ENCODE measurements at regions of chr10 and their contacts with region 1.

Region 1: DNA sequence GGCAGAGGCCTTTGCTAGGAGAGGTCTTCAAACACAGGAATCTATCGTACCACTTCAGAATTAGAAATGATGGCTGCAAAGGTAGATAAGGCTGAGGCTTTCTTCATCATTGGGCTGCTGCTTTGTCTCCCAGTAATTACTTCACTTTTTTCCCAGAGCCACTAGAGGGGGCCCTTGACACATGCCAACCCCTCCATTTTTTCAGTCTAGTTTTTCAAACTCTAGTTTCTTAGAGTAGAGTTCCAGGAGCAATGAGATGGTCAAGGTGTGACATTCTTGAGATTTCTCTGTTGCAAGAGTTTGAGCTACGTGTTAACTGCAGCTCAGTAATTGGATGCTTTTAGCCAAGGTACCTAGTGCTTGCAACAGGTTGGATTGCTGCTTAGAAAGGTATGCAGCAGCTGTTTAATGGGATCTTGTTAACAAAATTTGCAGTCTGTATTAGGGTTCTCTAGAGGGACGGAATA is 33.8 kb upstream of the RBM20 start:
- DNase-seq: peak; percentile 19
- H3K4me3 ChIP-seq: no peak overlapping the region
- H3K27ac ChIP-seq: no peak overlapping the region
- H3K4me1 ChIP-seq: no peaks in the 10 kb centered on the region
- H3K27me3 ChIP-seq: peaks cover 3% of the 10 kb centered on the region
- CTCF ChIP-seq: peak in 3 of 4 experiments; percentile 60 to 66 (median 65)
- POLR2A ChIP-seq: no peak

Region 2: GRCh38 chr10:110671788-110672579 is 61.6 kb after region 1 on chr10:
- intact Hi-C with region 1: loop called (anchors 5 kb)
- DNase-seq: peak; percentile 26
- H3K4me3 ChIP-seq: peak overlapping the region; percentile 28 to 40
- H3K27ac ChIP-seq: no peak overlapping the region
- H3K4me1 ChIP-seq: no peaks in the 10 kb centered on the region
- H3K27me3 ChIP-seq: no peaks in the 10 kb centered on the region
- CTCF ChIP-seq: peak in 3 of 4 experiments; percentile 24 to 77 (median 53)
- POLR2A ChIP-seq: no peak

Measured in prostate gland (tissue), 2 donors.